ENCODE measurements at regions of chr2 and their contacts with region 1.

Region 1: DNA sequence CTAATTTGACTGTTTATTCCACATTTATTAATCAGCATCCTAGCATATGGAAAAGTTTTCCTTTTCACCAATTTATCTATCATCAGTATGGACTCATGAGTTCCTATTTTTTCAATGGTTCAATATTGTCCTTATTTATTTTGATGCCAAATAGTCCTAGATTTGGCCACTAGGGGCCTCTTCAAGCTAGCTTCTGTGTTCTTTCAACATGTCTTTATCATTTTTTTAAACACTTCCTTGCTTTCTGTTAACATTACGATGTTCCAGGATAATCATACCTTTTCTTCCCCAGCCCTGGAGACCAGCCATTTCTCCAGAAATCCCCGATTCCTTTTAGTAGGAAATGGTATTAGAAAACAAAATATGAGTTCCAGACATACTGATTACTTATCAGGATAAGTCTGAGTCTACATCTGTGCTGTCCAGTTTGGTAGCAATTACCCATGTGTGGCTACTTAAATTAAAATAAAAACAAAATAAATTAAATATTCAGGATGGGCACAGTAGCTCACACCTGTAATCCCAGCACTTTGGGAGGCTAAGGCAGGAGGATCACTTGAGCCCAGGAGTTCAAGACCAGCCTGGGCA is 70.6 kb downstream of the RPE start:
- DNase-seq: no peak
- ATAC-seq: peak; percentile 86
- H3K4me3 ChIP-seq: no peak overlapping the region
- H3K27ac ChIP-seq: no peak overlapping the region
- H3K4me1 ChIP-seq: no peaks in the 10 kb centered on the region
- H3K27me3 ChIP-seq: no peaks in the 10 kb centered on the region
- CTCF ChIP-seq: peak; percentile 58 to 72 (median 59)
- EP300 ChIP-seq: no peak
- POLR2A ChIP-seq: no peak
- RAD21 ChIP-seq: peak; percentile 70

Region 2: DNA sequence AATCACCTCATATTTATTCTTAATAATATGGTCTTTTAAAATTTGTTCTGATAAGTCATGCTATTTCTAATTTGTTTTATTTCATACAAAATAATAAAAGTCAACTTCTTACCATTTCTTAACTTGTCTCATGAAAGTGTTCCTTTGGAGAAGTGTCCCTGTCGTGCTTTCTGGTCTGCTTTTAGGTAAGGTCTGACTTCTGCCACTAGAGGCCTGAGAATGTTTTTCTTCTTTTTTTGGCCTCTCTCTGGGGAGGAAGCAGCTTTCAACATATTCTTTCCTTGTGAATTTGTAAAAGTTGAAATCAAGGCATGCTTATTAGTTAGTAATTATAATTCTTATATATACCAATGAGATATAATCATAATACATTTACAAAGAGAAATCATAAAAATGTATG is 609.8 kb before region 1 on chr2:
- CTCF ChIA-PET with region 1: no interaction called
- POLR2A ChIA-PET with region 1: no interaction called
- RAD21 ChIA-PET with region 1: no interaction called
- SMC1A ChIA-PET with region 1: no interaction called
- in situ Hi-C with region 1: no loop called
- intact Hi-C with region 1: no loop called
- DNase-seq: no peak
- ATAC-seq: no peak
- H3K4me3 ChIP-seq: no peak overlapping the region
- H3K27ac ChIP-seq: no peak overlapping the region
- H3K4me1 ChIP-seq: no peaks in the 10 kb centered on the region
- H3K27me3 ChIP-seq: no peaks in the 10 kb centered on the region
- CTCF ChIP-seq: 0 out of 6 replicates have a peak, but pooled peaks of 1 of the 3 experiments have one; percentile 20
- EP300 ChIP-seq: no peak
- POLR2A ChIP-seq: no peak
- RAD21 ChIP-seq: no peak

Region 3: GRCh38 chr2:209901172-209901571 is 171.8 kb before region 1 on chr2:
- CTCF ChIA-PET with region 1: no interaction called
- POLR2A ChIA-PET with region 1: no interaction called
- RAD21 ChIA-PET with region 1: no interaction called
- SMC1A ChIA-PET with region 1: no interaction called
- in situ Hi-C with region 1: no loop called
- intact Hi-C with region 1: no loop called
- DNase-seq: no peak
- ATAC-seq: no peak
- H3K4me3 ChIP-seq: no peak overlapping the region
- H3K27ac ChIP-seq: no peak overlapping the region
- H3K4me1 ChIP-seq: no peaks in the 10 kb centered on the region
- H3K27me3 ChIP-seq: no peaks in the 10 kb centered on the region
- CTCF ChIP-seq: no peak
- EP300 ChIP-seq: no peak
- POLR2A ChIP-seq: no peak
- RAD21 ChIP-seq: no peak

Region 4: DNA sequence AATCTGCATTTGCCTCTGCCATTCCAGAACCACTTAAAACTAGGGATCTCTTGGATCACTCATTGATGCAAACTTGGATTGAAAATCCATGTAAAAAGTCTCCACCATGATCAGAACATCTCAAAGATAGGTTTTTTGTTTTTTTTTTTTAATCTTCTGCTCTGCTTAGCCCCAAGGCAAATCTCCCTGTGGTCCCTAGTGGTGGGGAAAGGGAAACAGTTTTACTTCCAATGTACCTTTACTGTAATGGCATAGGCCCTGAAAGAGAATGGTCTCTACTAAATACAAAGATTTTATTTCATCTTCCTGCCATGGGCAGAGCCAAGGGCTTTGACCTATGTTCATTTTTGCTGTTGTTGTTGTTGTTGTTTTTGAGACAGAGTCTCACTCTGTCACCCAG is 19.8 kb after region 1 on chr2:
- CTCF ChIA-PET with region 1: interaction called, 10 read pairs
- POLR2A ChIA-PET with region 1: no interaction called
- RAD21 ChIA-PET with region 1: interaction called, 3 read pairs
- SMC1A ChIA-PET with region 1: interaction called, 4 read pairs
- in situ Hi-C with region 1: no loop called
- intact Hi-C with region 1: no loop called
- DNase-seq: no peak
- ATAC-seq: peak; percentile 32; the same call in 1 of the 3 replicates
- H3K4me3 ChIP-seq: no peak overlapping the region
- H3K27ac ChIP-seq: no peak overlapping the region
- H3K4me1 ChIP-seq: no peaks in the 10 kb centered on the region
- H3K27me3 ChIP-seq: no peaks in the 10 kb centered on the region
- CTCF ChIP-seq: no peak
- EP300 ChIP-seq: no peak
- POLR2A ChIP-seq: no peak
- RAD21 ChIP-seq: no peak

Region 5: DNA sequence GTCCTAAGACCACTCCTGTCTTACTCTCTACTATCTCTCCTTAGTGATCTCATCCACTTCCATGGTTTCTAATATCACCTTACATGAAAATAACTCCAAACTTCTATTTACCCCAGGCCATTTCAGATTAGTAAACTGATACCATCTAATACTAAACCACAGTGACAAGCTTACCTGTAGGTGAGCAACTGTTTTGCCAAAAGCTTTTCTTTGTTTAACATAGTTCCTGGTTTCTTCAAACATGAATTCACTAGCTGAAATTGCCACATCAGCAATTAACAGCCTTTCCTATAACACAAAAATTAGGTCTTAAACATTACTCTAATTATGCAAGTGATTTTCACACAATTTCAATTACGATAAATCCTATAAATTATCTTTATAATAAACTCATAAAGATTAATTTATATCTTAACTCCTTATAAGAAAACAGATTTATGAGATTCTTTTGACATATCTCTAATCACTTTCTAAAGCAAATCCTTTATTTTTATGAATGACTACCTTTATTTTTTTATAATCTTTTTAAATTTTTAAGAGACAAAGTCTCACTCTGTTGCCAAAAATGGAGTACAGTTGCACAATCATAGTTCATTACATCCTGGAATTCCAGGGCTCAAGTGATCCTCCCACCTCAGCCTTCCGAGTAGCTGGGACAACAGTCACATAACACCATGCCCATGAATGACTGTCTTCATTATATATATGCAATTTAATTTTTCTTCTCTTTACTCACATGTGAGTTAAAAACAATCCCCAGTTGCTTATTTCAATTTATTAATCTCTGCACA is 130.3 kb after region 1 on chr2:
- CTCF ChIA-PET with region 1: interaction called, 18 read pairs
- POLR2A ChIA-PET with region 1: no interaction called
- RAD21 ChIA-PET with region 1: interaction called, 7 read pairs
- SMC1A ChIA-PET with region 1: interaction called, 7 read pairs
- in situ Hi-C with region 1: loop called (anchors 5 kb)
- intact Hi-C with region 1: no loop called
- DNase-seq: no peak
- ATAC-seq: no peak
- H3K4me3 ChIP-seq: no peak overlapping the region
- H3K27ac ChIP-seq: no peak overlapping the region
- H3K4me1 ChIP-seq: no peaks in the 10 kb centered on the region
- H3K27me3 ChIP-seq: no peaks in the 10 kb centered on the region; a peak in 1 of 4 replicates
- CTCF ChIP-seq: no peak
- EP300 ChIP-seq: no peak
- POLR2A ChIP-seq: no peak
- RAD21 ChIP-seq: no peak